Colonic mucosa (tissue), 4 donors: ENCODE measurements at regions of chr14 and their contacts with region 1.

Region 1: GRCh38 chr14:103385152-103385993 is at the start of gene MARK3:
- DNase-seq: peak; percentile 97
- H3K4me3 ChIP-seq: peak within 1 kb of the TSS; percentile 87
- H3K27ac ChIP-seq: peak within 1 kb of the TSS; percentile 99
- H3K4me1 ChIP-seq: peaks cover 3% of the 10 kb centered on the region
- H3K27me3 ChIP-seq: no peaks in the 10 kb centered on the region
- CTCF ChIP-seq: no peak
- total RNA-seq, gene MARK3: 52.5 to 63.6 TPM

Region 2: GRCh38 chr14:103333754-103334643 is 51.4 kb before region 1 on chr14 and contains the start of gene EIF5:
- intact Hi-C with region 1: loop called (anchors 10 kb)
- DNase-seq: peak; percentile 100
- H3K4me3 ChIP-seq: peak within 1 kb of the TSS; percentile 88
- H3K27ac ChIP-seq: peak within 1 kb of the TSS; percentile 100
- H3K4me1 ChIP-seq: peaks cover 6% of the 10 kb centered on the region
- H3K27me3 ChIP-seq: no peaks in the 10 kb centered on the region
- CTCF ChIP-seq: no peak
- total RNA-seq, gene EIF5: 169 to 265 TPM